Activated T-helper 1 cell treated with anti-CD3 and anti-CD28 coated beads, Interleukin-12 subunit alpha, Interleukin-12 subunit beta, Interleukin-2, Interleukin-4 antibody, amounts not matched to agents 30 ng/mL and 10 ng/mL and 1 ng/mL, durations not matched to agents 14 hours and 24 hours and 36 hours (primary cell): ENCODE measurements at regions of chr19 and their contacts with region 1.

Region 1: GRCh38 chr19:56538254-56538760 is 441 bp upstream of the ZFP28 start:
- DNase-seq: peak; percentile 79
- H3K4me3 Mint-ChIP-seq: peak overlapping the region; percentile 86
- H3K27ac Mint-ChIP-seq: peak overlapping the region; percentile 91
- H3K4me1 Mint-ChIP-seq: peaks cover 3% of the 10 kb centered on the region
- H3K27me3 Mint-ChIP-seq: no peaks in the 10 kb centered on the region

Region 2: GRCh38 chr19:56507446-56508289 is 30.6 kb before region 1 on chr19 and contains the start of gene ZNF471:
- intact Hi-C with region 1: loop called (anchors 1 kb)
- DNase-seq: peak; percentile 44
- H3K4me3 Mint-ChIP-seq: peak within 1 kb of the TSS; percentile 37
- H3K27ac Mint-ChIP-seq: no peak within 1 kb of the TSS
- H3K4me1 Mint-ChIP-seq: no peaks in the 10 kb centered on the region
- H3K27me3 Mint-ChIP-seq: no peaks in the 10 kb centered on the region
- total RNA-seq, gene ZNF471: 0.05 and 0.16 TPM in 2 replicates

Region 3: GRCh38 chr19:56567274-56568120 is 29.2 kb after region 1 on chr19 and contains the start of gene ZNF470:
- intact Hi-C with region 1: loop called (anchors 1 kb)
- DNase-seq: peak; percentile 82
- H3K4me3 Mint-ChIP-seq: peak within 1 kb of the TSS; percentile 87
- H3K27ac Mint-ChIP-seq: peak within 1 kb of the TSS; percentile 89
- H3K4me1 Mint-ChIP-seq: no peaks in the 10 kb centered on the region
- H3K27me3 Mint-ChIP-seq: no peaks in the 10 kb centered on the region
- total RNA-seq, gene ZNF470: 1.2 and 2.4 TPM in 2 replicates

Region 4: GRCh38 chr19:56594783-56595547 is 56.7 kb after region 1 on chr19 and contains the start of gene ZNF71:
- intact Hi-C with region 1: loop called (anchors 1 kb)
- DNase-seq: peak; percentile 82
- H3K4me3 Mint-ChIP-seq: peak within 1 kb of the TSS; percentile 92
- H3K27ac Mint-ChIP-seq: peak within 1 kb of the TSS; percentile 59
- H3K4me1 Mint-ChIP-seq: peaks cover 14% of the 10 kb centered on the region
- H3K27me3 Mint-ChIP-seq: no peaks in the 10 kb centered on the region
- total RNA-seq, gene ZNF71: 5.1 and 5.9 TPM in 2 replicates

Region 5: GRCh38 chr19:57135797-57136196 is 597.5 kb after region 1 on chr19:
- intact Hi-C with region 1: no loop called
- DNase-seq: no peak
- H3K4me3 Mint-ChIP-seq: no peak overlapping the region
- H3K27ac Mint-ChIP-seq: no peak overlapping the region
- H3K4me1 Mint-ChIP-seq: no peaks in the 10 kb centered on the region
- H3K27me3 Mint-ChIP-seq: no peaks in the 10 kb centered on the region